Naive thymus-derived CD4-positive, alpha-beta T cell (primary cell): ENCODE measurements at regions of chr7 and their contacts with region 1.

Region 1: GRCh38 chr7:1664711-1665548 is 5.1 kb upstream of the ELFN1 start:
- DNase-seq: peak in 7 of 9 donors; percentile 14 to 56 (median 50)
- ATAC-seq: peak; percentile 48
- H3K4me3 ChIP-seq: peak overlapping the region; percentile 17
- H3K4me3 Mint-ChIP-seq: peak overlapping the region in 4 of 10 donors; percentile 10 to 90 (median 40)
- H3K27ac ChIP-seq: no peak overlapping the region
- H3K27ac Mint-ChIP-seq: no peak overlapping the region
- H3K4me1 ChIP-seq: no peaks in the 10 kb centered on the region
- H3K4me1 Mint-ChIP-seq: peaks cover 5 to 14% (median 7%) of the 10 kb centered on the region in 7 donors
- H3K27me3 ChIP-seq: peaks cover 0 to 10% of the 10 kb centered on the region in 2 donors
- H3K27me3 Mint-ChIP-seq: peaks cover 34 to 50% (median 38%) of the 10 kb centered on the region in 5 donors

Region 2: DNA sequence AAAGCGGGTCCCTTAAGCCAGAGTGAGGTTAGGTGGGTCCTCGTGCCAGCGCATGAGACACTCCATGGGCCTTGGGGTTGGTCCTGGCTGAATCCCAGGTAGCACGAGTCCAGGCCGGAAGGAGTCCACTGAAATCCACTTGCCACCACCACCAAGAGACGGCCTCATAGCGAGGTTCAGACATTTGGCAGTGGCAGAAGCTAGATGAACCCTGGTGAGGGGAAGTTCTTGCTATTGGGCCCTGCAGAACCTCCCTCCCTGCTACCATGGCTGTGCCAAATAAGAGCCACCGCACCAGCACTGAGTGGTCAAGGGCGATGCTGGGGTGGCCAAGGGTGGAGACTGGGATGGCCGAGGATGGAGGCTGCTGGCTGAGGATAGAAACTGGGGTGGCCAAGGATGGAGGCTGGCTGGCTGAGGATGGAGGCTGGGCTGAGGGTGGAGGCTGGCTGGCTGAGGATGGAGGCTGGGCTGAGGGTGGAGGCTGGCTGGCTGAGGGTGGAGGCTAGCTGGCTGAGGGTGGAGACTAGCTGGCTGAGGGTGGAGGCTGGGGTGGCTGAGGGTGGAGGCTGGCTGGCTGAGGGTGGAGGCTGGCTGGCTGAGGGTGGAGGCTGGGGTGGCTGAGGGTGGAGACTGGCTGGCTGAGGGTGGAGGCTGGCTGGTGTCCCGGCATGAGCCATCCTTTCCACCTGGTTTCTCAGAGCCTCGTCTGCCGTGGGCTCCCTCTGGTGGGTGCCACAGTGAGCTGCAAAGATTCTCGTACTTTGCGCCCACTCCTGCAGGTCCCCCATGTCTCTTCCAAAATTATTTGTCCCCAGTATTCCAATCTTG is 93.3 kb after region 1 on chr7:
- CTCF ChIA-PET with region 1: no interaction called
- POLR2A ChIA-PET with region 1: no interaction called
- intact Hi-C with region 1: loop called in 1 of 2 experiments (anchors 10 kb)
- DNase-seq: peak in 1 of 9 donors; percentile 12
- ATAC-seq: peak; percentile 55
- H3K4me3 ChIP-seq: no peak overlapping the region
- H3K4me3 Mint-ChIP-seq: no peak overlapping the region
- H3K27ac ChIP-seq: no peak overlapping the region
- H3K27ac Mint-ChIP-seq: no peak overlapping the region
- H3K4me1 ChIP-seq: no peaks in the 10 kb centered on the region
- H3K4me1 Mint-ChIP-seq: peaks cover 0 to 9% (median 3%) of the 10 kb centered on the region in 7 donors
- H3K27me3 ChIP-seq: no peaks in the 10 kb centered on the region
- H3K27me3 Mint-ChIP-seq: peaks cover 0 to 7% (median 0%) of the 10 kb centered on the region in 5 donors

Region 3: DNA sequence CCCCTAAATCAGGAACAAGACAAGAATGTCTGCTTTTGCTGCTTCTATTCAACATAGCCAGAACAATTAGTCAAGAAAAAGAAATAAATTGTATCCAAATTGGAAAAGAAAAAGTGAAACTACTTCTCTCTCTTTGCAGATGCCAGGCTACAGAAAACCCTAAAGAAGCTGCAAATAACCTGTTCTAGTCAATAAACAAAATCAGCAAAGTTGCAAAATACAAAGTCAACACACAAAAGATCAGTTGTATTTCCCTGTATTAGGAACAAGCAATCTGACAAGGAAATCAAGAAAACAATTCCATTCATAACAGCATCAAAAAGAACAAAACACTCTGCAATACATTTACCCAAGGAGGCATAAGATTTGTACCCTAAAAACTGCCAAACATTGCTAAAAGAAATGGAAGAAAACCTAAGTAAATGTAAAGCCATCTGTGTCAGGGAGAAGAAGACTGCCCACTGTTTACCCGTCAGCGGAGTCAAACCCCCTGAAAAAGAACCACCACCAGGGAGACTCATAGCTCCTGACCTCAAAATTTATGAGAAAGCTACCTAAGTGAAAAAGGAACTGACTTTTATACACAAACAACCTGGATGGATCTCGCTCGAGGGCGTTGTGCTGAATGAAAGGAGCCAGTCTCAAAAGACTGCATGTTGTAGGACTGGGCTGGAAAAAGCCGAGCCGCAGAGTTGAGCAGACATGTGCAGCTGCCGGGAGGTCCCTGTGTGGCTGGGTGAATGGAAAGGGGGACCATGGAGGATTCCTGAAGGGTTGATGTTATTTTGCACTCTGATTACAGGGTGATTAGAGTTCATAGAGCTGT is 304.7 kb after region 1 on chr7:
- CTCF ChIA-PET with region 1: no interaction called
- POLR2A ChIA-PET with region 1: no interaction called
- intact Hi-C with region 1: loop called in 1 of 2 experiments (anchors 2 kb)
- DNase-seq: peak in 1 of 9 donors; percentile 18
- ATAC-seq: no peak
- H3K4me3 ChIP-seq: no peak overlapping the region
- H3K4me3 Mint-ChIP-seq: peak overlapping the region; percentile 17 to 73 (median 54)
- H3K27ac ChIP-seq: no peak overlapping the region
- H3K27ac Mint-ChIP-seq: peak overlapping the region; percentile 44 to 93 (median 79)
- H3K4me1 ChIP-seq: peaks cover 0 to 12% of the 10 kb centered on the region in 2 donors
- H3K4me1 Mint-ChIP-seq: peaks cover 20 to 55% (median 42%) of the 10 kb centered on the region in 7 donors
- H3K27me3 ChIP-seq: no peaks in the 10 kb centered on the region
- H3K27me3 Mint-ChIP-seq: no peaks in the 10 kb centered on the region

Region 4: GRCh38 chr7:2104107-2104710 is 439.3 kb after region 1 on chr7:
- CTCF ChIA-PET with region 1: no interaction called
- POLR2A ChIA-PET with region 1: no interaction called
- intact Hi-C with region 1: loop called in 1 of 2 experiments (anchors 10 kb)
- DNase-seq: peak; percentile 43 to 79 (median 70)
- ATAC-seq: peak; percentile 76
- H3K4me3 ChIP-seq: peak overlapping the region; percentile 15
- H3K4me3 Mint-ChIP-seq: peak overlapping the region in 9 of 10 donors; percentile 19 to 67 (median 56)
- H3K27ac ChIP-seq: peak overlapping the region; percentile 42
- H3K27ac Mint-ChIP-seq: peak overlapping the region; percentile 3 to 94 (median 71)
- H3K4me1 ChIP-seq: peaks cover 7 to 24% of the 10 kb centered on the region in 2 donors
- H3K4me1 Mint-ChIP-seq: peaks cover 18 to 42% (median 31%) of the 10 kb centered on the region in 7 donors
- H3K27me3 ChIP-seq: no peaks in the 10 kb centered on the region
- H3K27me3 Mint-ChIP-seq: no peaks in the 10 kb centered on the region

Region 5: DNA sequence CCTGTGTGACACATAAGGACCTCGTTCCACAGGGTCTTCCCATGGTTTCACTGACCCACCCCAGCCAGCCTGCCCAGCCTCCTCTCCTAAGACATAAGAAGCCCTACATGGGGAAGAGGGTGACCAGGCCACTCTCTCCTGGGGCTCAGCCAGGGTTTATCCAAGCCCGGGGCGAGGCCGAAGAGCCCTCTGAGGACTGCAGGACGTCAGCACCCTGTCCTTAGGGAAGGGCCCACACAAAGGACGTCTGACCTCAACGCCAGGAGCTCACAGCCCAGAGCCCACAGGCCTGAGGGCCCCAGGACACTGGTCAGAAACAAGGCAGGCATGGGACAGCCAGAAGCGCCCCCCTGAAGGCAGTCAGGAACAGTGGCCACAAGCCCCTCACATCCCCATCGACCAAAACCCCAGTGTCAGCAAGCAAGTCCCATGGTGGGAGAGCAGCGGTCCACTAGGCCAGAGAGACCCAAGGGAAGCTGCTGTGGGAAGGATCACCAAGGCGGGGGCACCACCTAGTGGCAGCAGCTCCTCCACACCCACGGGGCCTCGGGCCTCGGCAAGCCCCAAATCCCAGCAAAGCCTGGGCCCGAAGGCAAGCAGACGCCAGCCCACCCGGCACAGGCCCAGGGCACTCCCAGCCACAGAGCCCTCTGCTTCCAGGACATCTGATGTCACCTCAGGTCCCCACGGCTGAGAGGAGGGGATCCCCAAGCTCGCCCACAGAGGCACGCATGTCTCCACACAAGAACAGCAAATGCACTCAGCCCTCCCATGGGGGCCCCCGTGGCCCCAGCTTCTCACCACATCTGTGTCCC is 544.4 kb after region 1 on chr7:
- CTCF ChIA-PET with region 1: no interaction called
- POLR2A ChIA-PET with region 1: no interaction called
- intact Hi-C with region 1: loop called in 1 of 2 experiments (anchors 2 kb)
- DNase-seq: peak in 8 of 9 donors; percentile 11 to 41 (median 28)
- ATAC-seq: peak; percentile 62
- H3K4me3 ChIP-seq: no peak overlapping the region
- H3K4me3 Mint-ChIP-seq: no peak overlapping the region
- H3K27ac ChIP-seq: no peak overlapping the region
- H3K27ac Mint-ChIP-seq: no peak overlapping the region
- H3K4me1 ChIP-seq: no peaks in the 10 kb centered on the region
- H3K4me1 Mint-ChIP-seq: peaks cover 0 to 10% (median 0%) of the 10 kb centered on the region in 7 donors
- H3K27me3 ChIP-seq: no peaks in the 10 kb centered on the region
- H3K27me3 Mint-ChIP-seq: no peaks in the 10 kb centered on the region

Region 6: GRCh38 chr7:2354186-2354938 is 689.4 kb after region 1 on chr7 and contains the start of gene EIF3B:
- CTCF ChIA-PET with region 1: no interaction called
- POLR2A ChIA-PET with region 1: no interaction called
- intact Hi-C with region 1: loop called in 1 of 2 experiments (anchors 2 kb)
- DNase-seq: peak; percentile 87 to 97 (median 94)
- ATAC-seq: peak; percentile 90
- H3K4me3 ChIP-seq: peak within 1 kb of the TSS; percentile 89
- H3K4me3 Mint-ChIP-seq: peak within 1 kb of the TSS; percentile 90 to 100 (median 94)
- H3K27ac ChIP-seq: peak within 1 kb of the TSS; percentile 97
- H3K27ac Mint-ChIP-seq: peak within 1 kb of the TSS; percentile 98 to 100 (median 100)
- H3K4me1 ChIP-seq: peaks cover 25 to 38% of the 10 kb centered on the region in 2 donors
- H3K4me1 Mint-ChIP-seq: peaks cover 16 to 48% (median 31%) of the 10 kb centered on the region in 7 donors
- H3K27me3 ChIP-seq: no peaks in the 10 kb centered on the region
- H3K27me3 Mint-ChIP-seq: peaks cover 0 to 3% (median 0%) of the 10 kb centered on the region in 5 donors
- total RNA-seq, gene EIF3B: 127 to 189 (median 158) TPM